IMR-90 (cell line): ENCODE measurements at regions of chr14 and their contacts with region 1.

Region 1: GRCh38 chr14:19947413-19948090 is 16.8 kb downstream of the OR4K1 start:
- DNase-seq: no peak
- ATAC-seq: no peak
- H3K4me3 ChIP-seq: no peak overlapping the region
- H3K27ac ChIP-seq: no peak overlapping the region
- H3K4me1 ChIP-seq: no peaks in the 10 kb centered on the region
- H3K27me3 ChIP-seq: no peaks in the 10 kb centered on the region
- CTCF ChIP-seq: no peak
- POLR2A ChIP-seq: no peak
- RAD21 ChIP-seq: no peak

Region 2: GRCh38 chr14:19918044-19918443 is 29.5 kb before region 1 on chr14:
- CTCF ChIA-PET with region 1: no interaction called
- POLR2A ChIA-PET with region 1: no interaction called
- dilution Hi-C with region 1: no loop called
- in situ Hi-C with region 1: no loop called
- intact Hi-C with region 1: loop called (anchors 5 kb)
- DNase-seq: no peak
- ATAC-seq: no peak
- H3K4me3 ChIP-seq: no peak overlapping the region
- H3K27ac ChIP-seq: no peak overlapping the region
- H3K4me1 ChIP-seq: no peaks in the 10 kb centered on the region
- H3K27me3 ChIP-seq: no peaks in the 10 kb centered on the region
- CTCF ChIP-seq: no peak
- POLR2A ChIP-seq: no peak
- RAD21 ChIP-seq: no peak